AG04450 (cell line): ENCODE measurements at regions of chr10 and their contacts with region 1.

Region 1: DNA sequence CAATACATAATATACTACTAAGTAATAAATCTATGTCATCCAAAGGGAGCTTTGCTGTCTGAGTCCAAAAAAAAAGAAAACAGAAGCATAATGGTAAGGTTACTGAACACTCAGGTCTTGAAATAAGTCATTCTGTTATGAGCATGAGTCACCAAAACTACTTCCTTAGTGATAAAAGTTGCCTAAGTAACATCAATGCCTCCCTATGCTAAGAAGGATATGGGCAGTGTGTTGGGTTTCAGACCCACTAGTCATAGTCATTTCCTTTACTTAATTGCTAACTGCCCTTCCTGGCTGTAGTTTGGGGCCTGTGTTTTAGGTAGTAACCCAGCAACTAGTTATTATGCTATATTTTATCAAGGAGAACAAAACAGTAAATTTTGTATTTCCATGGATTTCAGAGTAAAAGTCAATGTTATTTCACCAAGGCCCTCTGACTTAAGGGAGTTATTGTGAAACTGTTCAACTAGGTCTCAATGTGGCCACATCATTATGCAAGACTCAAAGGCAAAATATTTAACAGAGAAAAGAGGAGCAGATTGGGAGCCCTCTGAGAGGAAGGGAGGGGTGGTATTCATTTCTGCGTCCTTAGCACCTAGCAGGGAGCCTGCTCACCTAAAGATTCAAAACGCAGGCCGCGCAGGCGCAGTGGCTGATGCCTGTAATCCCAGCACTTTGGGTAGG is 11.7 kb upstream of the VIM start:
- DNase-seq: no peak
- H3K4me3 ChIP-seq: no peak overlapping the region
- H3K27ac ChIP-seq: peak overlapping the region; percentile 94
- H3K27me3 ChIP-seq: no peaks in the 10 kb centered on the region
- CTCF ChIP-seq: no peak

Region 2: DNA sequence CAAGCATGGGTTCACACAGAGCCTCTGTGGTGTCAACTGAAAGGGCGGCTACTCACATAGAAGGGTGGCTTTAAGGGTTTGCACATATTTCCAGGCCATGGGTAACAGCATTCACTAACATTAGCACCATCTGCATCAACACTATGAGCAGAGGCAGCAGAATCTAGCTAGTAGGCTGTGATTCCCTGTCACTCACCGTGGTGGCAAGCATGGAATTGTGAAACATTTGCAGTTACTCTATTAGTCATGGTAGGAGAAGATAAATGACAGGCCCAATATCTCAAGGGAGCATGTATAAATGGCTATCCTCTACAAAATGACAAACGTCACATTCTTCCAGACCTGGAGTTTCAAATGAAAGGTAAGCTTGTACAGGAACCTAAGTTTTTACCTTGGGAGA is 54.6 kb before region 1 on chr10:
- CTCF ChIA-PET with region 1: no interaction called
- POLR2A ChIA-PET with region 1: no interaction called
- DNase-seq: no peak
- H3K4me3 ChIP-seq: no peak overlapping the region
- H3K27ac ChIP-seq: no peak overlapping the region
- H3K27me3 ChIP-seq: no peaks in the 10 kb centered on the region
- CTCF ChIP-seq: no peak

Region 3: DNA sequence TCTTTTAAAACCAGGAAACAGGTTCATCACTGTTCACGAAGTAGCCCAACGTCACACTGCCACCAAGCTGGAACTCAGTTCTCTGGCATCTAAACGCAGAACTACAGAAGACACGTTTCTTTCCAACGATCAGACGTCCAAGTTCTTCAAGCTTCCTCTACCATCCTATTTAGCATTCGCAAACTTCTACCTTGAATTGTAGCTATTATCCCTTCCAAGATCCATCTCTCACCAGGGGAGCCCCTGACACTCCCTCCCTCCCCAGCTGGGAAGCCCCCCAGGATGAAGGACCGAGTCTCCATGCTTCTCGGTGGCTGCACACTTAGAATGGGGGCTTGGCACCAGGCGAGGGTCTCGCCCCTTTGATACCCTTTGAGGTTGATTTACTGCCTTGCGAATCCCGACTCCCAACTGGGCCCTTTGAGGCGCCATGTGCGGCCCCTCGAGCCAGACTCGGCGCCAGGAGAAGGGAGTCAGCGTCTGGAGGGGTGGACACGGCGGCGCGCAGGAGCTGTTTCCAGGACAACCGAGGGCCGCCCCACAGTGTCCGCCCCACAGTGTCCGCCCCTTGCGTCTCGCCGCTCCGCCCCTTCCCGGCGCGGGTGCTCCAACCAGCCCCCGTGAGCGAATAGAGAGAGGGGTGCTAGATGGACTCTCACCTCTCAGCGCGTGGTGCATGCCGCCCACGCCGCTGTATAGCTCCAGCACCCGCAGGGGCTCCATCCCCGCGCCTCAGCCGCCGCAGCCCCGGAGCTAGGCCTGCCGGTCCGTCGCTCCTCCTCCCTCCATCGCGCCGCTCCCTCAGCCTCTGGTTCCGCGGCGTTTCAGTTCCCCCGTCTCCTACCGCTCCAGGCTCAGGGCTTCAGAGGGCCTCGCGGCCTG is 15.2 kb before region 1 on chr10 and contains the start of gene TRDMT1:
- CTCF ChIA-PET with region 1: interaction called, 3 read pairs
- POLR2A ChIA-PET with region 1: interaction called, 12 read pairs
- DNase-seq: no peak
- H3K4me3 ChIP-seq: peak within 1 kb of the TSS; percentile 75
- H3K27ac ChIP-seq: peak within 1 kb of the TSS; percentile 94
- H3K27me3 ChIP-seq: no peaks in the 10 kb centered on the region
- CTCF ChIP-seq: no peak
- polyA plus RNA-seq, gene TRDMT1: 5.2 and 7.1 TPM in 2 replicates